ENCODE measurements at regions of chr14 and their contacts with region 1.

Region 1: GRCh38 chr14:94380225-94381148 is 7.9 kb downstream of the SERPINA1 start:
- DNase-seq: no peak
- ATAC-seq: no peak
- H3K4me3 ChIP-seq: no peak overlapping the region
- H3K27ac ChIP-seq: no peak overlapping the region
- H3K4me1 ChIP-seq: no peaks in the 10 kb centered on the region
- H3K27me3 ChIP-seq: no peaks in the 10 kb centered on the region

Region 2: DNA sequence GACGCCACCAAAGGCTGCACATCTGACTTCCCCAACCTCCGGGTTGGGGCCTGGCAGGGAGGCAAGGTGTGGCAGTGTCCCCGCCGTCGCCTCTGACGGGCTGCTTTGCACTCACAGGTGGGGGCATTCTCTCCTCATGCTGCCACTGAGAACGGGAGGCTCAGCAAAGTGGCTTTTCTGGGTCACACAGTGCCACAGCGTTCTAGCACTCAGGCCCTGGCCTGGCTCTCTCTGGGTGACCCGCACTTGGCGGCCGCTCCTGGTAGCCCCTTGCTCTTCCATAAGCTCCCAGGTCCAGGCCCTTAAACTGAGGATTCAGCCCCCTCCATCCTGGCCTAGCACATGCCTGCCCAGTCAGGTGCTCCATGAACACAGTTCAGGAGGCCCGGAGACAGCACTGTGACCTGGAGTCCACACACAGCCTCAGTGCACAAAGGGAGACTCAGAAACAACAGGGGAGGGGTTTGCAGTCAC is 17.3 kb before region 1 on chr14:
- intact Hi-C with region 1: loop called in 1 of 4 experiments (anchors 1 kb)
- DNase-seq: no peak
- ATAC-seq: no peak
- H3K4me3 ChIP-seq: no peak overlapping the region
- H3K27ac ChIP-seq: no peak overlapping the region
- H3K4me1 ChIP-seq: no peaks in the 10 kb centered on the region
- H3K27me3 ChIP-seq: no peaks in the 10 kb centered on the region

Region 3: GRCh38 chr14:94439453-94440057 is 59.1 kb after region 1 on chr14:
- intact Hi-C with region 1: no loop called
- DNase-seq: no peak
- ATAC-seq: no peak
- H3K4me3 ChIP-seq: no peak overlapping the region
- H3K27ac ChIP-seq: no peak overlapping the region
- H3K4me1 ChIP-seq: no peaks in the 10 kb centered on the region
- H3K27me3 ChIP-seq: no peaks in the 10 kb centered on the region

Measured in right cardiac atrium (tissue), 5 donors.